IMR-90 (cell line): ENCODE measurements at regions of chr12 and their contacts with region 1.

Region 1: DNA sequence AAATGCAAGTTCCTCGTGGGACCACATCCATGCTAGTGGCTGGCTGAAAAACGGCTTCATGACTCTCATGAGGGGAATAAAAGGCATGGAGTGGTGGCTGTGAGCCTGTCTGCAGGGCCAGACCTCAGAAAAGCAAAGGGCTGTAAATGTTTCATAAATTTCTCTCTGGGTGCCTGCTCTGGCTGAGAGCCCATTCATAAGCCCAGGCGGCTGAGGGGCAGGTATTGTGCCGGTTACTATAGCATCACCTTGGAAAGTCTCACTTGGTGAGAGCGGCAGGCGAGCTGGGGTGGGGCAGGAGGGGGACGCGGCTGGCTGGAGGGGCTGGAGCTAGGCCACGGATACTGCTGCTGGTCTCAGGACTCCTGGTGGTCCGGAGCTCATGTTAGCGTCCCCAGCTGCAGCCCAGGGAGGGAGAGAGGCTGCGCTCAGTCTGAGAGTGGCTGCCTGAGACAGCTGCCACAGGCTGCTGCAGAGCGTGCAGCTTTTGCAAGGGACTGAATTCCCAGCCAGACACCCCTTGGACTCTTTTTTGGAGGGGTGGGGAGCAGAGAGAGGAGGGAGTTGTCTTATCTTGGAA is at the start of gene SLC17A8:
- DNase-seq: no peak
- ATAC-seq: peak; percentile 49; the same call in 1 of the 2 replicates
- H3K4me3 ChIP-seq: no peak within 1 kb of the TSS
- H3K27ac ChIP-seq: no peak within 1 kb of the TSS
- H3K4me1 ChIP-seq: no peaks in the 10 kb centered on the region; the same call in 1 of the 2 replicates
- H3K27me3 ChIP-seq: peaks cover 14% of the 10 kb centered on the region
- CTCF ChIP-seq: no peak
- POLR2A ChIP-seq: no peak
- RAD21 ChIP-seq: no peak
- total RNA-seq, gene SLC17A8: not detected in 2 replicates

Region 2: DNA sequence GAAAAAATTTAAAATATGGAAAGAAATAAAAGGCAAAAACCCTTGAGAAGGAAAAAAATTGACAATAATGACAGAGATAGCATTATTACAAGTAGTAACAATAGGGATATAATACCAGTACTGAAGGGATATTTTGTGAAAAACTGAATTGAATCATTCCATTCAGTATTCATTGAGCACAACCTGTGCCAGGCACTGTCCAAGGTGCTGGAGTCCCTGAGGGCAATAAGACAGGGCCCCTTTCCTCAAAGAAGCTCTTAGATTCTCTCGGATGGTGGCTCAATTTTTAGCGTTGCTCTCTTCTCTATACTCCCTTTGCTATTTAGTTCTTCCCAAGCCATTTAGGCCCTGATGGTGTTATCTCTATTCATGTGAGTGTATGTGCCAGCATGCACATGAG is 182.5 kb after region 1 on chr12:
- CTCF ChIA-PET with region 1: no interaction called
- POLR2A ChIA-PET with region 1: no interaction called
- dilution Hi-C with region 1: no loop called
- in situ Hi-C with region 1: loop called (anchors 25 kb)
- intact Hi-C with region 1: no loop called
- DNase-seq: peak; percentile 37
- ATAC-seq: 0 out of 2 replicates have a peak, but pooled peaks have one; percentile 42
- H3K4me3 ChIP-seq: no peak overlapping the region
- H3K27ac ChIP-seq: no peak overlapping the region
- H3K4me1 ChIP-seq: no peaks in the 10 kb centered on the region
- H3K27me3 ChIP-seq: no peaks in the 10 kb centered on the region
- CTCF ChIP-seq: no peak
- POLR2A ChIP-seq: no peak
- RAD21 ChIP-seq: no peak

Region 3: DNA sequence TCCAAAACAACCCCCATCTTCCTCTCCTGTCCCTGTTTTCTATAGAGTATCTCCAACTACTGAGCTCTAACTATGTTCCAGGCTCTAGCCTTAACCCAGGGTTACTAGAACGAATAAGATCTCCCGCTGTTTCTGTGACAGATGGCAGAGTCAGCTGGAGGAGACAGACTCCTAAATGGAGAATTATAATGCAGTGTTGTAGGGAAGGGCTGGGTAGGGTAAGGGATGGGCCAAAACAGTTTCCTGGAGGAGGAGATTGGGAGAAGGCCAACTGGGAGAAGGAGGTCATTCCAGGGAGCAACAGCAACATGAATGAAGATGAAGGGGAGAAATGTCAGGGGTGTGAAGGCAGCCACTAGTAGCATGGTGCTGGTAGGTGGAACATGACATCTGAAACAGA is 364.4 kb after region 1 on chr12:
- CTCF ChIA-PET with region 1: no interaction called
- POLR2A ChIA-PET with region 1: no interaction called
- dilution Hi-C with region 1: no loop called
- in situ Hi-C with region 1: no loop called
- intact Hi-C with region 1: no loop called
- DNase-seq: no peak
- ATAC-seq: no peak
- H3K4me3 ChIP-seq: no peak overlapping the region
- H3K27ac ChIP-seq: no peak overlapping the region
- H3K4me1 ChIP-seq: no peaks in the 10 kb centered on the region
- H3K27me3 ChIP-seq: peaks cover 18% of the 10 kb centered on the region
- CTCF ChIP-seq: no peak
- POLR2A ChIP-seq: no peak
- RAD21 ChIP-seq: no peak